Transverse colon (tissue), 4 donors: ENCODE measurements at regions of chr21 and their contacts with region 1.

Region 1: GRCh38 chr21:28522014-28522799 is 470.5 kb downstream of the LTN1 start:
- DNase-seq: no peak
- H3K4me3 ChIP-seq: no peak overlapping the region
- H3K27ac ChIP-seq: no peak overlapping the region
- H3K4me1 ChIP-seq: peaks cover 0 to 2% (median 0%) of the 10 kb centered on the region in 4 donors
- H3K27me3 ChIP-seq: no peaks in the 10 kb centered on the region
- CTCF ChIP-seq: no peak
- EP300 ChIP-seq: no peak
- POLR2A ChIP-seq: no peak

Region 2: DNA sequence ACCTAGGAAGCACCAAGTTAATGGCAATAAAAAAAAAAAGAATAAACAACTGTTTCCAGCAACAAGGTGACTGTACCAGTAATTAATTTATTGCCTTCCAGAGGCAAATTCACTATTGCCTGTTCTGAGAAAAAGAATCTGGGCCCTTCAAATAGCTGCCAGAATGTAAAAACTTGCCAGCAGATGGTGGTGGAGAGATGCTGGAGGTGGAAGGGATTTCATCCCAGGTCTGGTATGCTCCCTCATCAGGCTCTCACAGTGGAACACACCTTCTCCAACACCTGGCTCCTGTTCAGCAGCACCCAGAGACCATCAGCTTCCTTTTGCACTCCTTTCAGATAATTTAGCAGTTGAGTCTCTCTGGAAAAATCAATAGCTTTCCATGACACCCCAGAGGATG is 762.4 kb before region 1 on chr21:
- in situ Hi-C with region 1: no loop called
- intact Hi-C with region 1: no loop called
- DNase-seq: no peak
- H3K4me3 ChIP-seq: no peak overlapping the region
- H3K27ac ChIP-seq: no peak overlapping the region
- H3K4me1 ChIP-seq: peaks cover 0 to 10% (median 8%) of the 10 kb centered on the region in 4 donors
- H3K27me3 ChIP-seq: no peaks in the 10 kb centered on the region
- CTCF ChIP-seq: no peak
- EP300 ChIP-seq: no peak
- POLR2A ChIP-seq: no peak

Region 3: GRCh38 chr21:28737674-28738419 is 215.6 kb after region 1 on chr21:
- in situ Hi-C with region 1: loop called in 3 of 4 experiments (anchors 10 to 25 kb)
- intact Hi-C with region 1: loop called (anchors 10 kb)
- DNase-seq: no peak
- H3K4me3 ChIP-seq: no peak overlapping the region
- H3K27ac ChIP-seq: no peak overlapping the region
- H3K4me1 ChIP-seq: no peaks in the 10 kb centered on the region
- H3K27me3 ChIP-seq: no peaks in the 10 kb centered on the region
- CTCF ChIP-seq: no peak
- EP300 ChIP-seq: no peak
- POLR2A ChIP-seq: no peak